ENCODE measurements at regions of chr1 and their contacts with region 1.

Region 1: DNA sequence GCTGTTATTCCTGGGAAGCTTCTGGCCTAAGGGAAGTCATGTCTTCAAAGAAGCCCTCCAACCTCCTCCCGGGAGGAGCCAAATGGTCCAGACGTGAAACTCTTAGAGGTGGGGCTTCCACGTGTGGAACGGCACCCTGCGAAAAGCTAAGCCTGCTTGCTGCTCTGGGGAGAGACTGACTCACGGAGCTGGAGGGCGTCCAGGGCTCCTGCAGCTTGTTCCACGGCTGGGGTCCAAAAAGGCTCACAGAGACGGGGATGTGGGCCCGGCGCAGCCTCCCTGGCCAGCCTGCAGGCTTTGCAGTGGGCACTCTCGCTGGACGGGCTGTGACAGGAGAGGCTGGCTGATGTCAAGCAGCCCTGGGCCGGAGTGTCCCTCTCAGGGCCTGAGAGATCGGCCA is 105.1 kb downstream of the COLGALT2 start:
- DNase-seq: peak; percentile 94

Region 2: DNA sequence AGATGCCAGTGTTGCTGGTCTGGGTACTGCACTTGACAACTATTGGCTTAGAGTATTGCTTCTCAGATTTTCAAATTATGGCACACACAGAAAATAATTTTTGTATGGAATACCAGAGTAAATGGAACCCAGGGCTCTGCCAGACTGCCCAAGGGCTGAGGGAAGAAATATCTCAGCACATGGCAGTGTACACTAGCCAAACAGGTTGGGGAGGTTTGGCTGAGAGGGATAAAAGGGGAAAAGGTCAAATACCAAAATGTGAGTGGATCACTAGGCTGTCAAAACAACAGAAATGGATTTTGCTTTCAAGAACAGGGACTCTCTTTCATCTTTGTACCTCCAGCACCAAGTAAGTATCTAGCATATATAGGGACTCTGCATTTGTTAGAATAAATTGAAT is 1245.0 kb before region 1 on chr1:
- intact Hi-C with region 1: loop called in 1 of 2 experiments (anchors 5 kb)
- DNase-seq: no peak

Region 3: GRCh38 chr1:183881387-183882131 is 50.9 kb before region 1 on chr1:
- intact Hi-C with region 1: no loop called
- DNase-seq: peak; percentile 80

Region 4: GRCh38 chr1:184743062-184743756 is 810.8 kb after region 1 on chr1:
- intact Hi-C with region 1: no loop called
- DNase-seq: no peak